ENCODE measurements at regions of chr1 and their contacts with region 1.

Region 1: DNA sequence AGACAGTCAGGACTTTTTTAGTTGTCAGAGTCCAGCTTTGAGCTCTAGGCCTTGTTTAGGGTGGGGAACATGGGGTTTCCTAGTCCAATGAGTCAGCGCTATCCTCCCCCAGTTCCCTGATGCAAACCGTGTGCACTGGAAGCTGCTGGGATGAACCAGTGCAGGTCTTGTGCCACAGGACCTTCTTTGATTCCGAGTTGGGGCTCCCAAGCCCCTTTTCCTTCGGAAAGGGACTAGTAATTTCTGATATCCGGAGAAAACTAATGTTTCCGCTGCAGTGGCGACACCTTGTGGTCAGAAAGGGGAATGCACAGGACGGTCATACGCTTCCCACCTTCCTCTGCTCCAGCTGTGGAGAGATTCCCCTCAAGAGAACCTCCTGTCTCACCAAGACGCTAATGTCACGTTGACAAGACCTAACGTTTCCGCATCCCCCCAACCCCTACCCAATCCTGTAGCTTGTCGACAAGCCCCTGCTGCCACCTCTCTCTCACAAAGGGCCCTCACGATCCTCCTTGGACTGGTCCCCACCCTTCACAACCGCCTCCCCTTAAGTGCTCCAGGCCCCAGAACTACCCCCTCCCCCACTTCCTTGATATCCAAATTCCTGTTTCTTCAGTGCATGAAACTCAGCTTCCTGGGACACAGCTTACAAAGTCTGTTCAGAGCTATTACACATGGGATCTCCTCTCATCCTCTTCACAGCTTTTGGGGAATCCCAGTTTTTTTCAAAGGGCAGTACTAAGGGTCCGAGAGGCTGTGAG is 30.9 kb downstream of the GPA33 start:
- DNase-seq: peak in 9 of 10 donors; percentile 53 to 86 (median 80)
- H3K4me3 ChIP-seq: peak overlapping the region in 13 of 59 donors; percentile 3 to 40 (median 17)
- H3K27ac ChIP-seq: peak overlapping the region in 2 of 59 donors; percentile 0 to 27
- H3K27me3 ChIP-seq: peaks cover 0 to 4% (median 0%) of the 10 kb centered on the region in 45 donors
- CTCF ChIP-seq: peak; percentile 89 to 100 (median 98)

Region 2: GRCh38 chr1:166838766-166839599 is 220.2 kb before region 1 on chr1 and contains the start of gene POGK:
- intact Hi-C with region 1: loop called in 1 of 2 experiments (anchors 5 kb)
- DNase-seq: peak; percentile 84 to 96 (median 91)
- H3K4me3 ChIP-seq: peak within 1 kb of the TSS; percentile 58 to 88 (median 76)
- H3K27ac ChIP-seq: peak within 1 kb of the TSS; percentile 75 to 99 (median 96)
- H3K27me3 ChIP-seq: no peaks in the 10 kb centered on the region
- CTCF ChIP-seq: peak in 34 of 56 donors; percentile 17 to 60 (median 34)
- total RNA-seq, gene POGK: 37.1 to 98.5 (median 49.7) TPM

Region 3: GRCh38 chr1:166884040-166884642 is 175.1 kb before region 1 on chr1:
- intact Hi-C with region 1: loop called (anchors 2 to 5 kb)
- DNase-seq: peak; percentile 56 to 80 (median 62)
- H3K4me3 ChIP-seq: peak overlapping the region; percentile 1 to 67 (median 47)
- H3K27ac ChIP-seq: peak overlapping the region in 1 of 59 donors; percentile 46
- H3K27me3 ChIP-seq: peaks cover 0 to 8% (median 0%) of the 10 kb centered on the region in 45 donors
- CTCF ChIP-seq: peak; percentile 36 to 86 (median 78)

Region 4: DNA sequence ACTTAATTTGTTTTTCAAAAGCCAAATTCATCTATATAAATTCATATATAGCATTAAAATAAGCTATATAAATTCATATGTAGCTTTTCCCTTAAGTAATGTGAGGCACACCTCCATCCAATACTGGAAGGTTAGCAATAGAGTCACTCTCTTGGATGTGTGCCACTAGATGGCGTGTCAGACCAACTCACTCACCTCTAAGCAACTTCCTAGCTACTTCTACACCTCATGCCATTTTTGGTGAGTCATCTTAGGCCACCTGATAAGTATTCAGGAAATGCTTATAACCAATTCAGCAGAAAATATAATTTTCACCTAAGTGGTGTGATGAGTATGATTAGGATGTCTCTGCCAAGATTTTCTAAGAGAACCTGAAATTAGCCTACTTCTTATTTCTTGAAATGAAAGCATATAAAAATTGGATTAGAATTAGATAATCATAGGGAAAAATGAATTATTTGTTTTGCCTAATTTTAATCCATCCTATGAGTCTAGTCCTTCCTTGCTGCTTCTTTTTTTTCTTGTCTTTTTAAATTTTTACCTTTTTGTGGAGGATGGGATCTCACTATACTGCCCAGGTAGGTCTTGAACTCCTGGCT is 148.7 kb before region 1 on chr1:
- intact Hi-C with region 1: loop called (anchors 1 kb)
- DNase-seq: peak in 9 of 10 donors; percentile 31 to 81 (median 65)
- H3K4me3 ChIP-seq: no peak overlapping the region
- H3K27ac ChIP-seq: no peak overlapping the region
- H3K27me3 ChIP-seq: no peaks in the 10 kb centered on the region
- CTCF ChIP-seq: peak; percentile 37 to 97 (median 82)